Right ventricle myocardium superior (tissue), 1 donor: ENCODE measurements at regions of chr11 and their contacts with region 1.

Region 1: DNA sequence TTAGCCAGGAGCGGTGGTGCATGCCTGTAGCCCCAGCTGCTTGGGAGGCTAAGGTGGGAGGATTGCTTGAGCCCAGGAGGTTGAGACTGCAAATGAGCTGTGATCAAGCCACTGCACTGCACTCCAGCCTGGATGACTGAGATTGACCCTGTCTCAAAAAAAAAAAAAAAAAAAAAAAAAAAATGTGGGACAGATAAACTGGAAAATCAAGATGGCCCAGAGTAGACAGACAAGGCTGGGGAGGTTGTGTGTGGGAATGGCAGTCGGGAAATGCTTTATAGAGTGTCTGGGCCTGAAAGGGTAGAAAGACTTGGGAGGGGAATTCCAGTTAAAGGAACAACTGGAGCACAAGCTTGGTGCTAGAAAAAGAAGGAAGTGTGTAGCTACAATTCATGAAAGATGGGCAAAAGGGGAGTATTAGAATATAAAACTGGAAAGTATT is 18.2 kb upstream of the WDR74 start:
- DNase-seq: no peak
- ATAC-seq: no peak

Region 2: DNA sequence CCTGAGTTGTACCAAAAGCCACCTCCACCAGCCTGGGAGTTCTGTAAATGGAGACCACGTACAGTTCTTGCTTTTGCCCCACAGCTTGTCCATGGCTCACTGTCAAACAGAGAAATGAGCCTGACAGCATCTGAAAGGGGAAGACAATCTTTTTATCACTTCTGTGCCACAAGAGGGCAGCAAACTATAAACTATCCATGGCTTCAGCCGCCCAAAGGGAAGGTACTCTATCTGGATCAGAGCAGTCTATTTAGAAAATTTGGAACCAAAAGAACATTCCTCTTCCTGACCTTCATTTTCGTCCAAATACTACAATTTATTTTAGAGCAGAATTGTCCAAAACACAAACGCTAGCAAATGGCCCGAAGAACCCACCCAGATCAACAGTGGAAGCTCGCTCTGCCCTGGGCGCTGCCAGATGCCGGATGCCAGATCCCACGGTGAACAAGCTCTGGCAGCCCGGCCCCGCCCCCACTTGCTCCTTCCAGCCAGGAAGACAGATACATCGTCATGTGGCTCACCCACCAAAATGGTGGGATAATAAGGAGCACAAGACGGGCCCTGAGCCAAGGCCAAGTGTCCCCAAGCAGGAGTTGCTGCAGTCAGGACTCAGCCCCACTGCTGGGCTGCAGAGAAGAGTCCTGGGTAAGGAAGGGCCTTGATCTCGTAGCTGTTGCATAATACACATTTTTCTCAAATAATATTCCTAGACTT is 462.6 kb before region 1 on chr11:
- intact Hi-C with region 1: loop called (anchors 10 kb)
- DNase-seq: peak; percentile 90
- ATAC-seq: peak; percentile 90

Region 3: DNA sequence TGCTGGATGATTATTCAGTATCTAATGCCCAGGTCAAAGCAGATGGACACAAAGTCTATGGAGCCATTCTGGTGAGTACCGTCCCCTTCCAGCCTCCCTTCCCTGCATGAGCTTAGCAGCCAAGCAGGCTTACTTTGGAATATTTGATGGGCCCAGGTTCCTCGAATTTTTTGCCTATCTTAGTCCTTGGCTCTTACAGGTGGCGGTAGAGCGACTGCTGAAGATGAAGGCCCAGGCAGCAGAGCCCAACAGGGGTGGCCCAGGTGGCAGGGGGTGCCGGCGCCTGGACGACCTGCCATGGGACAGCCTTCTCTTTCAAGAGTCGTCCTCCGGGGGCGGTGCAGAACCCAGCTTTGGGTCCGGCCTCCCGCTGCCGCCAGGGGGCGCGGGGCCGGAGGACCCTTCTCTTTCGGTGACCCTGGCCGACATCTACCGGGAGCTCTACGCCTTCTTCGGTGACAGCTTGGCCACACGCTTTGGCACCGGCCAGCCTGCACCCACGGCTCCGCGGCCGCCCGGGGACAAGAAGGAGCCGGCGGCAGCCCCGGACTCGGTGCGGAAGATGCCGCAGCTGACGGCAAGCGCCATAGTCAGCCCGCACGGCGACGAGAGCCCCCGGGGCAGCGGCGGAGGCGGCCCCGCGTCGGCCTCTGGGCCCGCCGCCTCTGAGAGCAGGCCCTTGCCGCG is 71.1 kb before region 1 on chr11:
- intact Hi-C with region 1: loop called (anchors 1 kb)
- DNase-seq: peak; percentile 93
- ATAC-seq: peak; percentile 88